ENCODE measurements at regions of chr11 and their contacts with region 1.

Region 1: DNA sequence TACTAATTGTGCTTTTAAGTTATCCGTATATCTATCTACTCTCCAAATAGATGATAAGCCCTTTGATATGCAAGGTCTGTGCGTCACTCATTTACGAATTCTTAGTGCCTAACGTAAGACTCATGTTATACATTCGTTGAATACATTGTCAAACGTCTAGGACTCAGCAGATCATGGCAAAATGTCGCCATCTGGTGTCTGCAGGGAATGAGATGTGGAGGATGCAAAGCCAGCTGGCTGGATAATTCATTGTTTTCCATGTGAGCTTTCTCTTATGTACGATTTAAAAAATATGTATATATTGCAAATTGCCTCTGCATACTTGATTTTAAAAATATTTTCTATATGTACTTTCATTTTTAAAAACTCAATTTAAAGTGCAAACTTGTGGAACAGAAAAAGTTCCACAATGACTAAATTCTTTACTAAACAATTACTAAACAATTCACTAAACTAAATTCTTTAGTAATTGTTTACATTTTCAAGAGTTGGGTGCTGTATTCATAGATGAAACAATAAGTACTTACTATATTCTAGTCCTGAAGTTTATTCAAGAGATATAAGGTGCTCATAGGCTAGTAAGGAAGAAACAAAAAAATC is 33.8 kb downstream of the ZNF202 start:
- DNase-seq: no peak
- ATAC-seq: peak; percentile 37
- H3K4me3 Mint-ChIP-seq: no peak overlapping the region
- H3K27ac Mint-ChIP-seq: no peak overlapping the region
- H3K4me1 Mint-ChIP-seq: peaks cover 7% of the 10 kb centered on the region
- H3K27me3 Mint-ChIP-seq: peaks cover 6% of the 10 kb centered on the region
- CTCF ChIP-seq: no peak

Region 2: DNA sequence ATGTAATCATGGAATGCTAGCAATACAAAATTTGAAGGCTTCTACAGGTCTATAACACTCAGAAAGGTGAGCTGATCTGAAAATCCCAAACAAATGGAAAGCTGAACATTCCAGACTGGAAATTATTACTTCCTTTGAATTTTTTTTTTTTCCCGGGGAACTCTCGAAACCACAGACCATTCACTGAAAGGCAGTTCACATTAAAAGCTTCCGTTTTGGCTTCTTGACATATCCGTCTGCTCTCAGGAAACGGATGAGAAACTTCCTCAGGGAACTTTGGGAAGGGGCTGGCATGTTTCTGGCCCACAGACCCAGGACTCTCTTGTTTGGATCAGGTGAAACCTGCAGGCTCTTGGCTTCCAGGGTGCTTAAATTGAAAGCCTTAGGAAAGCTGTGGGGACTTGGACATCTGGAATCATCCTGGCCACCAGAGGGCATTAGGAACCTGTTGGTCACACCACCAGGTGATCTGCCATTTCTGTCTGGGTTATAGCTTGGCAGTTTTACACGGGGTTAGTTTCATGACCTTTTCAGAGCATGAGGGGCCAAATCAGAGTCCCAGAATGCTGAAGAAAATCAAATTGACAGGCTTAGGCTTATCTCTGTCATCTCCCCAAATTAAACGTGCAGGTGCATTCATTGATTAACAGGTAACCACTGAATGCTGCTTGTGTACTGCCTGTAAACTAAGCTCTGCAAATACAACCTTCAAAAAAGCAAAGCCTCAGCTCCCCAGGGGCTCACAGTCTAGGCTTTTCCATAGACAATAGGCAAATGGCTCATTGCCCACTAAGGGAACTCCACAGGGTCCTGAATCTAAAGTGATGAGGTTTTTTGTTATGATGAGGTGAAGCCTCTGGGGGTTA is 300.3 kb before region 1 on chr11:
- CTCF ChIA-PET with region 1: interaction called, 10 read pairs
- POLR2A ChIA-PET with region 1: no interaction called
- intact Hi-C with region 1: loop called (anchors 5 kb)
- DNase-seq: no peak
- ATAC-seq: peak; percentile 56
- H3K4me3 Mint-ChIP-seq: no peak overlapping the region
- H3K27ac Mint-ChIP-seq: no peak overlapping the region
- H3K4me1 Mint-ChIP-seq: peaks cover 6% of the 10 kb centered on the region
- H3K27me3 Mint-ChIP-seq: peaks cover 4% of the 10 kb centered on the region
- CTCF ChIP-seq: no peak

Region 3: GRCh38 chr11:123640677-123641494 is 66.8 kb before region 1 on chr11:
- CTCF ChIA-PET with region 1: interaction called, 89 read pairs
- POLR2A ChIA-PET with region 1: no interaction called
- intact Hi-C with region 1: loop called (anchors 1 kb)
- DNase-seq: peak; percentile 33
- ATAC-seq: peak; percentile 50
- H3K4me3 Mint-ChIP-seq: no peak overlapping the region
- H3K27ac Mint-ChIP-seq: no peak overlapping the region
- H3K4me1 Mint-ChIP-seq: peaks cover 3% of the 10 kb centered on the region
- H3K27me3 Mint-ChIP-seq: peaks cover 35% of the 10 kb centered on the region
- CTCF ChIP-seq: no peak

Region 4: DNA sequence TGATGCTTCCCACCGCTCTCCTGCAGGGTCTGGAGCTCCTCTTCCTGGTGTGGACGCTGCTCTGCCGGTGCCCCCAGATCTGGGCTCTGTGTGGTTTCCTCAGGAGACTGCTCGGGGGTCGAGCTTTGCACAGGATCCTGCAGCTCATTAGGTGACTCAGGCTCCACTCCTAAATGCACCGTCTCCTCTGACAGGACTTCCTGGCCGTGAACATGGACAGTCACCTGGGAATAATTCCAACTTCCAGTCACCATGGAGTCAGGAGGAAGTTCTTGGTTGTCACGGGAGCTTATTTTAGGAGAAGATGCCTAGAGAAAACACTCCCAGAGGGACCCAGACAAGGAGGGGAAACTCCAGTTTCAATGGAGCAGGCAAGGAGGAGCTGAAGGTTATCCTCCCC is 21.9 kb after region 1 on chr11:
- CTCF ChIA-PET with region 1: interaction called, 10 read pairs
- POLR2A ChIA-PET with region 1: no interaction called
- intact Hi-C with region 1: no loop called
- DNase-seq: no peak
- ATAC-seq: no peak
- H3K4me3 Mint-ChIP-seq: no peak overlapping the region
- H3K27ac Mint-ChIP-seq: no peak overlapping the region
- H3K4me1 Mint-ChIP-seq: no peaks in the 10 kb centered on the region
- H3K27me3 Mint-ChIP-seq: no peaks in the 10 kb centered on the region
- CTCF ChIP-seq: no peak

Region 5: GRCh38 chr11:123760894-123761293 is 53.2 kb after region 1 on chr11:
- CTCF ChIA-PET with region 1: no interaction called
- POLR2A ChIA-PET with region 1: no interaction called
- intact Hi-C with region 1: no loop called
- DNase-seq: no peak
- ATAC-seq: no peak
- H3K4me3 Mint-ChIP-seq: no peak overlapping the region
- H3K27ac Mint-ChIP-seq: no peak overlapping the region
- H3K4me1 Mint-ChIP-seq: no peaks in the 10 kb centered on the region
- H3K27me3 Mint-ChIP-seq: no peaks in the 10 kb centered on the region
- CTCF ChIP-seq: no peak